ENCODE measurements at regions of chr15 and their contacts with region 1.

Region 1: DNA sequence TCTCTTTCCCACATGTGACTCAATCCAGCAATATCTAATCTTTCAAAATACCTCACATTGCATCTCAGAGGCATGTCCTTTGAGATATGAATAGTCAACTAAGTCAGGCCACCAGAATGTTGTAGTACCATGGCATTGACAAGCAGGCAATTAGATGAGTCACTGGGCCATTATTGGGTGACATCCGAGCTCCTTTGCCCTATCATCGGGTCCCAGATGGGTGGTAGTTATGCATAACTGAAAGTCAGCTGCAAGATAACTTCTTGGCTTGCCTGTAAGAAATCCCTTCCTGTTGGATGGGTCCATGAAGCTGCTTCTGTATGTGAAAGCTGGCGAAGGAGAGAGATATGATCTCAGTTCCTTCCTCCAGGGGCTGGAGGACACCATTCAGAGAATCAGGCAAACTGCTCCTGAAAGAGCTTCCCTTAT is 32.8 kb downstream of the ARRDC4 start:
- DNase-seq: peak; percentile 58
- H3K4me3 ChIP-seq: no peak overlapping the region
- H3K27ac ChIP-seq: peak overlapping the region; percentile 42
- H3K4me1 ChIP-seq: peaks cover 13% of the 10 kb centered on the region
- H3K27me3 ChIP-seq: peaks cover 0 to 2% of the 10 kb centered on the region in 2 experiments
- CTCF ChIP-seq: no peak
- POLR2A ChIP-seq: no peak

Region 2: DNA sequence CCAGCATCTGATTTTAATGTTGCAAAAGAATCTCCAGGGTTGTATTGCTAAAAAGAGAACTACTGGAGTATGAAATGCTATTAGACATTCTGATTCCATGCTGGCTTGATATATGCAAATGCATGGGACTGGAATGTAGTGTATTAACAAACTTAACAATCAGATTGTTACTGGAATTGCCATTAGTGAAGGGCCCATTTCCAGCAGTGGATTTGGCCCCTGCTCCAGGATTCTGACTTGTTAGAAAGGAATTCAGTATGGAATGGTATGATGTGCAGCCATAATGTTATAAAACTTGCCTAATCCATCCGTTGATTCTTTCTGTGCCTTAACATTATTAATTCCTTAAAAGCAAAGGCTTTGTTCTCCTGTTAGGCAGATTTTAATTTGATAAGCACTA is 24.9 kb before region 1 on chr15:
- CTCF ChIA-PET with region 1: no interaction called
- POLR2A ChIA-PET with region 1: no interaction called
- dilution Hi-C with region 1: no loop called
- intact Hi-C with region 1: loop called (anchors 1 kb)
- DNase-seq: no peak
- H3K4me3 ChIP-seq: no peak overlapping the region
- H3K27ac ChIP-seq: no peak overlapping the region
- H3K4me1 ChIP-seq: peaks cover 10% of the 10 kb centered on the region
- H3K27me3 ChIP-seq: no peaks in the 10 kb centered on the region
- CTCF ChIP-seq: no peak
- POLR2A ChIP-seq: no peak

Region 3: DNA sequence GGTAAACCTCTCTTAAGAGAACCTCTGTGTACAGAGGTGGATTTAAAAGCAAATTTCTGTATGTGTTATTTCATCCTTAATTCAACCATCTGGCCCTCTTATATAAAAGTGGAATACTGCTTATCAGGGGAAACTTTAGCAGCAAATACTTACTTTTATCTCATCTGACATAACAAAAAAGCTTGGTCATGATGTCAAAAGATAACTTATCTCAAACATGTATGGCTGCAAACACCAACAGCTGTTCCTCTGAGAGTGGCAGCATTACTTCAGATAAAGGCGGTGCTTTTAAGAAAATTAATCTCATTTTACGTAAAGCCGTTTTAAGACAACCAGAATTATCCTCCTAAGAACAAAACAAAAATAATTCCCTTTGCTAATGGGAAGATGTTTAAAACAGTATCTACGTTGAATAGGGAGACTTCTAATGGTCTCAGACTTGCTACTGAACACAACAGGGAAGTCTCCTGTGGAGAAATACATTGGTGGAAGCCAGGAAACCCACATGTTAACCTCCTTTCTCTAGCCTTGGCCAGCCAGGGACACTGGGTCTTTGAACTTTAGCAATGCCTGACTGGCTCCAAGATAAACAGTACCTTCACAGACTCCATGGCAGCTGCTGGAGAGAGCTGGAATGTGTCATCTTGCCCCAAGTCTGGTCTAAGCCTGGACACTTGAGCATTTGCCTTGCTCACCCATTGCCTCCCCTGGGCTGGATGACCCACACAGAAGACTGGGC is 14.8 kb before region 1 on chr15:
- CTCF ChIA-PET with region 1: no interaction called
- POLR2A ChIA-PET with region 1: no interaction called
- dilution Hi-C with region 1: no loop called
- intact Hi-C with region 1: loop called (anchors 2 kb)
- DNase-seq: peak; percentile 80
- H3K4me3 ChIP-seq: no peak overlapping the region
- H3K27ac ChIP-seq: no peak overlapping the region
- H3K4me1 ChIP-seq: peaks cover 7% of the 10 kb centered on the region
- H3K27me3 ChIP-seq: no peaks in the 10 kb centered on the region
- CTCF ChIP-seq: no peak
- POLR2A ChIP-seq: no peak

Region 4: DNA sequence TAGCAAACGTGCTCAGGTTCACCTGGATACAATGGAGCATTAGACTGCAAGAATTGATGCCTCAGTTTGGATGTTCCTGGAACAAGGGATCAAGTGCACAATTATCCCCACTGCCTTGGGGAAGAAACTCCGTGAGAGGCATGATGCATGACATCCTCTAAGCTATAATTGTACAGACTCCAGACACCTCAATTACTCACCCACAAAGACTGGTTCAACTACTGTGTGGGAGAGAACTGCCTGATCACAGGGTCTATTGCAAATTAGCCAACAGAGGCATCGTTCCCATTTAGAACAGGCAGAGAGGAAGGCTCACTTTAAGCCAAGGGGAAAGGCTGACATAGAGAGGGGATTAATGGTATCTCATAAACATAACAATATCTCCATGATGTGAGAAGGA is 10.7 kb after region 1 on chr15:
- CTCF ChIA-PET with region 1: no interaction called
- POLR2A ChIA-PET with region 1: no interaction called
- dilution Hi-C with region 1: no loop called
- intact Hi-C with region 1: no loop called
- DNase-seq: no peak
- H3K4me3 ChIP-seq: no peak overlapping the region
- H3K27ac ChIP-seq: no peak overlapping the region
- H3K4me1 ChIP-seq: no peaks in the 10 kb centered on the region
- H3K27me3 ChIP-seq: no peaks in the 10 kb centered on the region
- CTCF ChIP-seq: no peak
- POLR2A ChIP-seq: no peak

Region 5: DNA sequence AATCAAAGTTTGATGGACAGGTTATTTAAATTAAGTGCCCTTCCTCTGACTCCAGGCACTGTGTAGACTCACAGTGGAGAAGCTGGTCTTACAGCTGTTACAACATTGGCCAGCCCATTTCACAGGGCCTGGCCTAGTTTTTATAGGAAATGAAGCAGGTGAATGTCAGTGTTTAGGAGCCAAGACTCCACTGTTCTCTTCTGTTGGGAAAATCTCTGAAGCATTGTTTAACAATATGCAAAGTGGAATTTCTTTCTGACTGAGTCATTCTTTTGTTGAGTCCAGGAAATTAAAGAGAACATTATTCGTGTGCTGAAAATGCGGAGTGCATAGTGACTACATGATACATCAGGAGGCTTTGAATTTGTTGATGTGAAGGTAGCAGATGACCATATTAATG is 31.9 kb after region 1 on chr15:
- CTCF ChIA-PET with region 1: no interaction called
- POLR2A ChIA-PET with region 1: no interaction called
- dilution Hi-C with region 1: no loop called
- intact Hi-C with region 1: loop called (anchors 1 kb)
- DNase-seq: peak; percentile 93
- H3K4me3 ChIP-seq: no peak overlapping the region
- H3K27ac ChIP-seq: peak overlapping the region; percentile 77
- H3K4me1 ChIP-seq: peaks cover 31% of the 10 kb centered on the region
- H3K27me3 ChIP-seq: no peaks in the 10 kb centered on the region
- CTCF ChIP-seq: no peak
- POLR2A ChIP-seq: no peak

Measured in endothelial cell of umbilical vein (primary cell).